Activated CD4-positive, alpha-beta memory T cell treated with anti-CD3 and anti-CD28 coated beads, Interleukin-2, amount 10 ng/mL, durations not matched to agents 7 days and 5 days (primary cell): ENCODE measurements at regions of chr6 and their contacts with region 1.

Region 1: DNA sequence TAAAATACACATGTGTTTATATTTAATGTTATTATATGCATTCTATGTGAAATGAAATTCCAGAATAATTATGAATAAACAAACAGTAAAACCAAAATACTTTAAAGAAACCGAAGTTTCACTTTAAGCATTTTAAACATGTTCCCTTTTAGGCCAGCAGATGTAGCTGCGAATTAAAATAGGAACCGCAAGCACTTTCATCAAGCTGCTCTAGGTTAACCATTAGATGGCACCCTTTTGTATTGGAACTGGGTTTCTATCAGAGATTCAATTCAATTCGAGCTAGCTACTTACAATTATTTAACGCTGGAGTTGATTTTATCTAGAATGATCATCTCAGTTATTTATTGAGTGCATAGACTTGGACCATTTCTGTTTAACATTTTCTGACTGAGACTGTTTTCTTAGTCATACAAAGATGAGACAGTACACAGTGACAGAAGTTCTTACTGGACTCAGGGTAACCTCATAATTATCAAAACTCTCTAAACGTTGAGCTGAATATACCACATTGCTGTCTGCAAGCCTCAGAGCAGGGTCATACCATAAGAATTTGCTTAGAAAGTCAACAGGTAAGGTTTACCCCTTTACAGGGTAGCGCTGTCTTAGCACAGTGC is 8.5 kb downstream of the TMEM242 start:
- DNase-seq: no peak
- H3K4me3 Mint-ChIP-seq: no peak overlapping the region
- H3K27ac Mint-ChIP-seq: no peak overlapping the region
- H3K4me1 Mint-ChIP-seq: peaks cover 11% of the 10 kb centered on the region
- H3K27me3 Mint-ChIP-seq: no peaks in the 10 kb centered on the region

Region 2: DNA sequence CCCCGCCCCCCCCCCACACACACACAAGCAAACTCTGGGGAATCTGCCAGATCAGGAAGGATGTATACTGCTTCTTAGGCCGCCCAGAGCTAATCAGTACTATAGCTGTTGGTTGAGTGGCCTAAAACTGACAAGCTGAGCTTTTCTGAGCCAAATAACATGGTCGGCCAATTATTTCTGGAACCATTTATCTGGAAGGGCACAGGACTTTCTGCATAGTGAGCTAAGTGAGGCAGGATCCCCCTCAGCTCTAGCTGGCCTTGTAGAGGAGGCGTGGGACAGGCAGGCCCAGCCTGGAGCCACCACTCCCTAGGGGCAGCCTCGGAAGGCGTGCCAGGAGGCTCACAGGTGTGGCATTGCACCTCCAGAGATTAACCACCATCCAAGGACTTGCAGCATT is 191.6 kb before region 1 on chr6:
- CTCF ChIA-PET with region 1: no interaction called
- POLR2A ChIA-PET with region 1: no interaction called
- DNase-seq: no peak
- H3K4me3 Mint-ChIP-seq: no peak overlapping the region
- H3K27ac Mint-ChIP-seq: no peak overlapping the region
- H3K4me1 Mint-ChIP-seq: peaks cover 5% of the 10 kb centered on the region
- H3K27me3 Mint-ChIP-seq: no peaks in the 10 kb centered on the region

Region 3: DNA sequence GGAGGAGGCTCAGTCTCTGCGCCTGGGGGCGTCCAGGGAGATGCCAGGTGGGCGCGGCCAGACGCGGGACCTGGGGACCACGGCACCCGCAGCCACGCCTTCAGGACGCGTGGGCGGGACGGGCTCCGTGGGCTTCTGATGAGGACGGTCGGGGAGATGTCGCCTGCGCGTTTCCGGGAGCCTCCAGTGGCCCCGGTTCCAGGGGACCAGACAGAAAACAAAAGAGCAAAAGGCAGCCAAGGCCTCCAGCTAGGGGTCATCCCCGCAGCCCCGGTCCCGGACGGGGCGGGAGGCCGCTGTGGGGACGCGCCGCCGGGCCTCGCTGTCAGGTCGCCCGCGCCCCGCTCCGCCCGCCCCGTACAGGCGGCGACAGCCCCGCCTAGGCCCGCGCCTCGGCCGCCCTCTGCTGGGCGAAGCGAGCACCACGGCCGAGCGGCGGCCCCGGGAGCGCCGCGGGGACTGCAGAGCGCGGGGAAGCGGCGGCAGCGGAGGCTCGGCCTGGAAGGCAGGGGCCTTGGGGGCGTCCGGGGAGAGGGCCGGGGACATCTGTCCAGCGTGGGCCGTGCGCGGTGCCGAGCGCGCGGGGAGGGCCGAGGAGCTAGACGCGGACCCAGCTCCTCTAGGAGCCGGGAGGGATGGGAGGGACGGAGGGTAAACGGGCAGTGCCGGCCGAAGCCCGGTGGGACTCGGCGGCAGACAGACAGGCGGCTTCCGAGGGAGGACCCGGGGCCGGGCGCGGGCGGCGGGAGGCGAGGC is 40.2 kb before region 1 on chr6:
- CTCF ChIA-PET with region 1: no interaction called
- POLR2A ChIA-PET with region 1: no interaction called
- DNase-seq: peak; percentile 87
- H3K4me3 Mint-ChIP-seq: peak overlapping the region; percentile 83
- H3K27ac Mint-ChIP-seq: peak overlapping the region; percentile 79
- H3K4me1 Mint-ChIP-seq: peaks cover 15% of the 10 kb centered on the region
- H3K27me3 Mint-ChIP-seq: peaks cover 2% of the 10 kb centered on the region

Region 4: DNA sequence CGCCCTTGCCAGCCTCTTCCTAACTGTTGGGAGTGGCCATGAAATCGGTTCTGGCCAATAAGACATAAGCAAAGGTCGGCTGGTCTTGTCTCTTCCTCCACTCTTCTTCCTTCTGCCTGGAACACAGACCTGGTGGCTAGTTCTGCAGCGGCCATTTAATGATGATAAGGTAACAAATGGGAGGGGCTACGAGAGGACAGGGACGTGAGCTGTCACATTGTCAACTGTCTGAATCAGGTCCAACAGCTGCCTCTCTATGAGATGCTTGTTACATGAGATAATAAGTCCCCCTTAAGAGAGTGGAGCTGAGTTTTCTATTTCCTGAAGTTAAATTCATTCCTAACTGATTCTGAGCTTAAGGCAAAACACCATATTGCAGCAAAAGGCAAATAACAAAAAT is 21.0 kb after region 1 on chr6:
- CTCF ChIA-PET with region 1: interaction called, 88 read pairs
- POLR2A ChIA-PET with region 1: no interaction called
- DNase-seq: no peak
- H3K4me3 Mint-ChIP-seq: no peak overlapping the region
- H3K27ac Mint-ChIP-seq: no peak overlapping the region
- H3K4me1 Mint-ChIP-seq: peaks cover 2% of the 10 kb centered on the region
- H3K27me3 Mint-ChIP-seq: peaks cover 47% of the 10 kb centered on the region

Region 5: GRCh38 chr6:157667211-157668008 is 352.6 kb after region 1 on chr6:
- CTCF ChIA-PET with region 1: interaction called, 53 read pairs
- POLR2A ChIA-PET with region 1: interaction called, 4 read pairs
- DNase-seq: peak; percentile 60
- H3K4me3 Mint-ChIP-seq: no peak overlapping the region
- H3K27ac Mint-ChIP-seq: no peak overlapping the region
- H3K4me1 Mint-ChIP-seq: peaks cover 5% of the 10 kb centered on the region
- H3K27me3 Mint-ChIP-seq: peaks cover 4% of the 10 kb centered on the region